ENCODE measurements at regions of chr3 and their contacts with region 1.

Region 1: DNA sequence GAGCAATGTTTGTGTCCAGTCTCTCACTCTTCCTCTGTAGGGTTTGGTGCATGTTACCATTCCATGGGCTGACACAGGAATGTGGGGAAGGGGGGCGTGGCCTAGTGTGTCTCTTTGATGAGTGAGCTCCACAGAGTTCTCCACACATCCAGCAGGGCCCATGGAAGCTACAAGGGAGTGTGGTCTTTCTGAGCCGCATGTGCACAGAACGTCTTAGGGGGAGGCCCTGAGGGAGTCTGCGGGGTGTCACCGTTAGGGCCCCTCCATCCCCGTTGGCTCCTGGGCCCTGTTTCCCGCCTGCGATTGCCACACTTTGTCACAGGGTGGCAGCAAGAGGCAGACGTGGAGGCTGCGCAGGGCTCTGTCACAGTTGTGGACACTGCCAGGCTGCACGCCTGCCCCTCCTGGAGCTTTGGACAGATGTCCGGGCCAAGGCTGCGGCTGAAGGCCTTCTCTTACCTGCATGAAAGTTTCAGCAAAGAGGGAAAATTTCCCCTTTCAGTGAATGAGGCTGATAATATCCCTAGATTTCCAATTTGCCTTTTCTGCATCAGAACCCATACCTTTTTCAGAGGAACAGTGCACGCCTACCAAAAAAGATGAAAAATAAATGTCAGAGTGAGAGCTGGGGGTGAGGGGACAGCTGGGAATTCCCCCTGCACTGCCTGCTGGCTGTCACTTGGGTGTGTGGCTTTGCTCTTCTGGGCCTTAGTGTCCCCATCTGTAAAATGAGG is 24.3 kb downstream of the CACNA2D3 start:
- DNase-seq: peak; percentile 81
- ATAC-seq: peak; percentile 94

Region 2: DNA sequence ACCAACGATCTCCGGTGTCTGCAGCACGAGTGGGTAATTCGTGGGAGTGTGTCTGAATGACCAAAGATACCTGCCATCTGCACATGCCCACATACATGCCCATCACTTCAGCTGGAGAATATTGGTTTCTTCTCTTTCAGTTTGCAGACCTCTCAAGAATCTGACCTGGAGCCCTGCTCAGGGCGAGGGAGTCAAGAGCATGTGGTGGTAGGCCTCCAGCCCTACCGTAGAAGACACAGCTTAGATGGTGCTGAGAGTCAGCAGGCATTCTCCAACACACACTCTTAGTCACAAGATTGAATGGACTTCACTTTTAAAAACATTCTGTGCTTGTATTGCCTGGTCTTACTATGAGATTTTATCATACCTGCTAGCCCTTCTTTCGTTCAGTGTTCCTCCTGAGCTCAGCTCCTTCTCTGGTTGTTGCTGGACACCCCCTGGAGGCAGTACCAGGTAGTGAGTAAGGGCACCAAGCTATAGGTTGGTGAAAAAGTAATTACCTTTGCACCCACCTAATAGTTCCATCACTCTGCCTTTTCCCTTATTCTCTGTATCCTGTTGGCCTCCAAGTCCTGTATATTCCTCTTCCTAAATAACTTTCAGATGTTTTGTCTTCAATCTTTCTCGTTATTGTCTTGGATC is 227.7 kb after region 1 on chr3:
- intact Hi-C with region 1: loop called (anchors 10 kb)
- DNase-seq: no peak
- ATAC-seq: peak; percentile 60

Measured in left ventricle myocardium superior (tissue), 1 donor.